Right cardiac atrium (tissue), 5 donors: ENCODE measurements at regions of chr11 and their contacts with region 1.

Region 1: DNA sequence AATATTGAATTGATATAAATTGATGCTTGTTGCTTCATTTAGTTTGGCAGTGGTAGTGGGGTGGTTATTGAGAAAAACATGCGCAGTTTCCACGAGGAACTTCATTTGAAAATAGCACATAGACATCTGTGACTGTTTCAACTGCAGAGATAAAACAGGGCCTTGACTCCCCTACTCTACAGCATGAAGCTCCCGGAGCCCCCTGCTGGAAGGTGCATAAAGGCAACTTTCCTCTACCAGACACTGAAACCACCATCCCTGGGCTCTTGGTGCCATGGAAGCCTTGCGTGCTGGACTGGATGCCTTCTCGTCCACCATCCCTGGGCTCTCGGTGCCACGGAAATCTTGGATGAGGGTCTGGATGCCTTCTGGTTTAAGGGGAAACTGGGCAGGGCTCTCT is 195.9 kb downstream of the CSNK2A3 start:
- DNase-seq: peak in 2 of 3 donors; percentile 32 to 41
- ATAC-seq: peak; percentile 29 to 47
- H3K4me3 ChIP-seq: no peak overlapping the region
- H3K27ac ChIP-seq: no peak overlapping the region
- H3K4me1 ChIP-seq: no peaks in the 10 kb centered on the region
- H3K27me3 ChIP-seq: no peaks in the 10 kb centered on the region

Region 2: GRCh38 chr11:11044137-11044855 is 112.9 kb before region 1 on chr11:
- intact Hi-C with region 1: loop called in 1 of 4 experiments (anchors 10 kb)
- DNase-seq: no peak
- ATAC-seq: peak in 1 of 2 donors; percentile 23
- H3K4me3 ChIP-seq: no peak overlapping the region
- H3K27ac ChIP-seq: no peak overlapping the region
- H3K4me1 ChIP-seq: no peaks in the 10 kb centered on the region
- H3K27me3 ChIP-seq: no peaks in the 10 kb centered on the region

Region 3: DNA sequence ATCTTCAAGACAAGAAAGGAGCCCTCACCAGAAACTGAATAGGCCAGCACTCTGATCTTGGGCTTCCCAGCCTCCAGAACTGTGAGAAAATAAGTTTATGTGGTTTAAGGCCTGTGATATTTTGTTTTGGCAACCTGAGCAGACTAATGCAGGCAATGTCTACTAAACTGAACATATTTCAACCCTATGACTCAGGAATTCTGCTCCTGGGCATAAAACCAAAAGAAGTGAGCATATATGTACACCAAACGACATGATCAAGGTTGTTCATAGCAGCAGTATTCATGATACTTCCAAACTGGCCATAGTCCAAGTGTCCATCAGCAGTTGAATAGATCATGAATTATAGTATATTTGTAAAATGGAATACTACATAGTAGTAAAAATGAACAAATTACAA is 166.9 kb after region 1 on chr11:
- intact Hi-C with region 1: no loop called
- DNase-seq: no peak
- ATAC-seq: no peak
- H3K4me3 ChIP-seq: no peak overlapping the region
- H3K27ac ChIP-seq: no peak overlapping the region
- H3K4me1 ChIP-seq: peaks cover 4% of the 10 kb centered on the region
- H3K27me3 ChIP-seq: no peaks in the 10 kb centered on the region

Region 4: GRCh38 chr11:12066799-12067508 is 909.8 kb after region 1 on chr11:
- intact Hi-C with region 1: no loop called
- DNase-seq: peak in 1 of 3 donors; percentile 63
- ATAC-seq: peak; percentile 65 to 68
- H3K4me3 ChIP-seq: no peak overlapping the region
- H3K27ac ChIP-seq: peak overlapping the region; percentile 26
- H3K4me1 ChIP-seq: peaks cover 8% of the 10 kb centered on the region
- H3K27me3 ChIP-seq: no peaks in the 10 kb centered on the region